H1 (cell line): ENCODE measurements at regions of chr6 and their contacts with region 1.

Region 1: GRCh38 chr6:90940812-90941481 is 354.1 kb upstream of the MAP3K7 start:
- DNase-seq: no peak
- H3K4me3 ChIP-seq: no peak overlapping the region
- H3K27ac ChIP-seq: no peak overlapping the region
- H3K4me1 ChIP-seq: no peaks in the 10 kb centered on the region
- H3K27me3 ChIP-seq: no peaks in the 10 kb centered on the region
- CTCF ChIP-seq: peak in 2 of 3 experiments; percentile 36 to 55; a peak in 2 of 4 replicates
- EP300 ChIP-seq: no peak
- POLR2A ChIP-seq: no peak
- RAD21 ChIP-seq: peak; percentile 87

Region 2: GRCh38 chr6:90610751-90611542 is 330.0 kb before region 1 on chr6:
- CTCF ChIA-PET with region 1: interaction called, 21 read pairs
- POLR2A ChIA-PET with region 1: no interaction called
- DNase-seq: peak in 1 of 2 experiments; percentile 77
- H3K4me3 ChIP-seq: peak overlapping the region; percentile 54 to 72 (median 58)
- H3K27ac ChIP-seq: no peak overlapping the region
- H3K4me1 ChIP-seq: peaks cover 4 to 12% (median 7%) of the 10 kb centered on the region in 4 experiments
- H3K27me3 ChIP-seq: peaks cover 0 to 10% (median 7%) of the 10 kb centered on the region in 4 experiments; a peak in 6 of 7 replicates
- CTCF ChIP-seq: peak in 1 of 3 experiments; percentile 7; a peak in 1 of 4 replicates
- EP300 ChIP-seq: no peak
- POLR2A ChIP-seq: no peak; a peak in 1 of 3 replicates
- RAD21 ChIP-seq: no peak

Region 3: GRCh38 chr6:90913266-90913960 is 27.5 kb before region 1 on chr6:
- CTCF ChIA-PET with region 1: interaction called, 13 read pairs
- POLR2A ChIA-PET with region 1: no interaction called
- DNase-seq: no peak
- H3K4me3 ChIP-seq: no peak overlapping the region
- H3K27ac ChIP-seq: no peak overlapping the region
- H3K4me1 ChIP-seq: no peaks in the 10 kb centered on the region
- H3K27me3 ChIP-seq: no peaks in the 10 kb centered on the region
- CTCF ChIP-seq: no peak
- EP300 ChIP-seq: no peak
- POLR2A ChIP-seq: no peak
- RAD21 ChIP-seq: no peak

Region 4: DNA sequence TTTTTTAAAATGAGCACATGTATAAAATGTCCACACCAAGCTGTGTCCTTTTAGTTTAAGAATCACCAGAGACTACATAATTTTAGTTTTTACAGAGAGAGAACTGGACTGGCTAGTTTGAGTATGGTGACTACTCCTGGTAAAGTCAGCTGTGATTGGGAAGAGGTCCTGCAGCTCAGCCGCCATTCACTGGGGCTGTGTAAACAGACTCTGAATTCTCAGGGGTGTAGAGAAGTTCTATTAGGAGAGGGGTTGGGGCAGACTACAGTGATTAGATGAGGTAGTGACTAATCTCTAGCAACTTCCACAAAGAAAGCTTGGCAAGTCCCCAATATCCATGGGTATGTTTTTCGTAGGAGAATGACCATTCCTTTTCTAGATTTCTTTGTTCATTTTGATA is 12.9 kb before region 1 on chr6:
- CTCF ChIA-PET with region 1: interaction called, 17 read pairs
- POLR2A ChIA-PET with region 1: no interaction called
- DNase-seq: no peak
- H3K4me3 ChIP-seq: no peak overlapping the region
- H3K27ac ChIP-seq: no peak overlapping the region
- H3K4me1 ChIP-seq: peaks cover 0 to 3% (median 0%) of the 10 kb centered on the region in 4 experiments; a peak in 1 of 7 replicates
- H3K27me3 ChIP-seq: no peaks in the 10 kb centered on the region
- CTCF ChIP-seq: no peak
- EP300 ChIP-seq: no peak
- POLR2A ChIP-seq: no peak
- RAD21 ChIP-seq: no peak

Region 5: DNA sequence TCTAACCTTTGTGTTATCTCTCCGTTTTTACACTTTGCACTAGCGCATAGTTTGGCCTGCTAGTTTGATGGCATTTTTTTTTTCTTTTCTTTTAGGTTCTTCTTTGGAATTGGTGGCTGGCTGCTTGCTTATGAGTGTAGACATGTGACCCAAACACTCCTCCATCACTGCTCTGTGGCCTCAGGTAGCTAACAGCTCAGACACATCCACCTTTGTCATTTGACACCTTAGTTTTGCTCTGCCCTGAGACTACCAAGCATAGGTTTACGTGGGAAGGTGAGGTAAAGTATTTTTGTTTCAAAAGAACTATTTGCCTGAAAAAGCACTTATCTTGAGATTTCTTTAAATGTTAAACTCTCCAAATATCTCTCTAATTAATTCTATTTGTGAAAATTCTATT is 14.3 kb after region 1 on chr6:
- CTCF ChIA-PET with region 1: interaction called, 12 read pairs
- POLR2A ChIA-PET with region 1: no interaction called
- DNase-seq: no peak
- H3K4me3 ChIP-seq: no peak overlapping the region
- H3K27ac ChIP-seq: no peak overlapping the region
- H3K4me1 ChIP-seq: peaks cover 0 to 5% (median 0%) of the 10 kb centered on the region in 4 experiments; a peak in 1 of 7 replicates
- H3K27me3 ChIP-seq: no peaks in the 10 kb centered on the region
- CTCF ChIP-seq: no peak
- EP300 ChIP-seq: no peak
- POLR2A ChIP-seq: no peak
- RAD21 ChIP-seq: no peak

Region 6: GRCh38 chr6:90982051-90982450 is 41.1 kb after region 1 on chr6:
- CTCF ChIA-PET with region 1: interaction called, 12 read pairs
- POLR2A ChIA-PET with region 1: no interaction called
- DNase-seq: no peak
- H3K4me3 ChIP-seq: no peak overlapping the region
- H3K27ac ChIP-seq: no peak overlapping the region
- H3K4me1 ChIP-seq: no peaks in the 10 kb centered on the region
- H3K27me3 ChIP-seq: no peaks in the 10 kb centered on the region
- CTCF ChIP-seq: peak in 2 of 3 experiments; percentile 45 to 48; a peak in 2 of 4 replicates
- EP300 ChIP-seq: no peak
- POLR2A ChIP-seq: no peak
- RAD21 ChIP-seq: peak; percentile 29 to 49; a peak in 2 of 4 replicates

Region 7: DNA sequence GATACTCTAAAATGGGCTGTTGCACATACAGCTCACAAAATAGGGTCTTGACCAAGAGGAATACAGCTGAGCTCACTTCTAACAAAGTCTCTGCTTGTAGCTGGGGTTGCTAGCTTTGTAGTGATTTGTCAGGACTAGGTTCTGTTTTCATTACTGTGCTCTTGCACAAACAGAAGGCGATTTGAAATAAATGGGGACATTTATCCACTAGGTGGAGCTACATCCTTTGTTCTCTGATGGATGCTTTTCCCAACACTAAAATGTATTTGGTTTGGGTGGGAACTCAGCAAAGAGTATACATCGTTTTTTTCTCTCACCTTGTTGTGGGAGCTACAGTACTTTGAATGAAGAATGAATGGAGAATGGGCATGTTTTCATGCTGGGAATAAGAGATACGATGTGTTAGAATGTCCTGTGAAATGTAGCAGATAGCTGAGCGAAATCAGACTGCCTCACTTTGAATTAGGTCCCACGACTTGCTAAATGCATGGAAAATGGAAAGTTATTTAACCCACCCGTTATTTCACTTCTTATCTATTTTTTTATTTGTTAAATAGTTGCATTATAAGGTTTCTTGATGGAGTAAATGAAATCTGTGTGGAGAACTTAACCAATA is 140.6 kb after region 1 on chr6:
- CTCF ChIA-PET with region 1: interaction called, 34 read pairs
- POLR2A ChIA-PET with region 1: no interaction called
- DNase-seq: no peak
- H3K4me3 ChIP-seq: no peak overlapping the region
- H3K27ac ChIP-seq: no peak overlapping the region
- H3K4me1 ChIP-seq: peaks cover 0 to 10% (median 6%) of the 10 kb centered on the region in 4 experiments; a peak in 5 of 7 replicates
- H3K27me3 ChIP-seq: no peaks in the 10 kb centered on the region
- CTCF ChIP-seq: peak in 2 of 3 experiments; percentile 59 to 77; a peak in 2 of 4 replicates
- EP300 ChIP-seq: no peak
- POLR2A ChIP-seq: no peak
- RAD21 ChIP-seq: peak; percentile 85 to 88

Region 8: GRCh38 chr6:91094341-91094740 is 153.4 kb after region 1 on chr6:
- CTCF ChIA-PET with region 1: no interaction called
- POLR2A ChIA-PET with region 1: no interaction called
- DNase-seq: no peak
- H3K4me3 ChIP-seq: no peak overlapping the region
- H3K27ac ChIP-seq: no peak overlapping the region
- H3K4me1 ChIP-seq: no peaks in the 10 kb centered on the region
- H3K27me3 ChIP-seq: no peaks in the 10 kb centered on the region
- CTCF ChIP-seq: no peak
- EP300 ChIP-seq: no peak
- POLR2A ChIP-seq: no peak
- RAD21 ChIP-seq: no peak